Posterior cingulate gyrus (tissue), 11 donors: ENCODE measurements at regions of chr7 and their contacts with region 1.

Region 1: GRCh38 chr7:104923010-104923421 is 91.0 kb upstream of the KMT2E start:
- DNase-seq: peak in 5 of 10 donors; percentile 28 to 66 (median 55)

Region 2: GRCh38 chr7:104231054-104232046 is 691.7 kb before region 1 on chr7:
- intact Hi-C with region 1: loop called (anchors 2 kb)
- DNase-seq: peak in 8 of 10 donors; percentile 35 to 90 (median 44)

Region 3: GRCh38 chr7:104883718-104884452 is 39.1 kb before region 1 on chr7:
- intact Hi-C with region 1: loop called (anchors 1 kb)
- DNase-seq: peak; percentile 40 to 96 (median 82)

Region 4: DNA sequence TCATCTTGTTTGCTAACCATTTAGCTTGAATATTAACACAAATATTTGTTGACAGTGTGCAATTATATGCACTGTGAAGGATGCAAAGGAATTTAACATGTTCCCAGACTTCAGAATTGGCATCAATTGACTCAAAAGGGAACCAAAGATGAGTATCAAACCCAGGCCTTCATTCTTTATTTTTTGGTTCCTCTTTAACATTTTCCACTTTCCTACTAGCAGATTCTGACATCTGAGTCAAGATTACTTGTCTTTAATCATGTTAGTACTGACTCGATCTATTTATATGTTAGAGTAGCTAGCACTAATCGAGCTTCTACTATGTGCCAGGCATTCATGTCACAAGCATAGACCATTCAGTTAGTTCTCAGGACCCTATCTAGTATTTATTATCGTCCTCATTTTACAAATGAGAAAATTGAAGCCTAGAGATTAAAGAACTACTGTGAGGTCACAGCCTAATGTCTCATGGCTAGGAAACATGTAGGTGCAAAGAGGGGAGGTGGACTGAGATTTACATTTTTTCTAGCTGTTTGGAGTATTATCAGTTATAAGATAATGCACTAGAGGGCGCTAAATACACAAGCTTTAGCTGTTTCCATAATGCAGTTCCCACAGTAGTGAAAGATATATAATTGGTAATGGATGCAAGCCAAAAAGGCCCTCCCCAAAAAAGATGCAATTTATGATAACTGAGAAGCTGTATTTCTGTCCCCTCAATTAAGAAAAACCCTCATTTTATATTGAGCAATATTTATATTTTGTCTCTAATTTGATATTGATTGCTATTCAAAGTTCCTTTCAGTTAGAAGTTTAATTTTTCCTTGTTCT is 58.0 kb after region 1 on chr7:
- intact Hi-C with region 1: no loop called
- DNase-seq: no peak